A673 (cell line): ENCODE measurements at regions of chr1 and their contacts with region 1.

Region 1: DNA sequence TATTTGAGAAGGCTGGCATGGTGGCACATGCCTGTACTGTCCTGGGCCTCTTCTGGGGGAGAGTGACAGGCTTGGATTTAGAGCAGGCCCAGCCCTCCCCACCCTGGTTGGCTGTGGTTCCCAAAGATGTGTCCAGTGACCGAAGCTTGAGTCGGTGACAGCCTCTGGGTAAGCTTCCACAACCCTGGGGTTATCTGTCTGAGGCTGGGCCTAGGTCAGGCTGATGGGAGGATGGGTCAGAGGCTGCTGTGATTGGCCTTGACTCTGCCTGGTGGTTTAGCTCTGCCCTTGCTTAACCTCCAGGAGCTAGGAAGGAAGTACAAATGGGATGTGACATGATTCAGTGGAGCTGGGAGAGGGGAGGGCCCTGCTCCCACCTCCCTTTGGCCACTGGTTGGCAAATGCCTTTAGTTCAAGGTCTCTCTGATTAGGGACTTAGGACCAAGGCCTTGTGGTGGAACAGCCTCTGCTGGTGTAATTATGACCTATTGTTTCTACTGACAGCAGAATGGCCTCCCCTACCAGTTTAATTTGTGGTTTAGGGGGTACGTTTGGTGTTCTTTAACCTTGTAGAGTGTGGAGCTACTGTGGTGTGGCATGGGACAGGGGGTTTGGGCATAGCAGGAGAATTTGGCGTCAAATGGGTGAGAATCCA is 16.6 kb downstream of the NUDC start:
- DNase-seq: no peak
- H3K4me3 ChIP-seq: no peak overlapping the region
- H3K27ac ChIP-seq: no peak overlapping the region
- H3K4me1 ChIP-seq: no peaks in the 10 kb centered on the region
- H3K27me3 ChIP-seq: no peaks in the 10 kb centered on the region
- CTCF ChIP-seq: no peak

Region 2: DNA sequence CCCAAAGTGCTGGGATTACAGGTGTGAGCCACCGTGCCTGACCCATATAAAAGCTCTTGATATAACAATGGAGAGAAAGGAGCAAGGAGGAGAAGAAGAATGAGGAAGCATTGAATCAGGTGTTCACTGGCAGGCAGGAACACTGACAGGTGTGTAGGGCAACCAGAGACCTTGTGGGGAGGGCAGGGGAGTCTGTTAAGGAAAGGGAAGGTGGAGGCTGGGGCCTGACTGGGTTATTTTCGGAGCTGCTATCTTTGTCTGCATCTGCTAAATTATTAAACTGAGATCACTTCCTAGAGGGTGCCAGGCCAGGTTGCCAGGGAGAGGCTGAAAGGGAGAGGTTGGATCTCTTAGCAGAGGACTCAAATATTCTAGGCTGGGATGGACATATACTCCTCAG is 48.5 kb after region 1 on chr1:
- CTCF ChIA-PET with region 1: no interaction called
- POLR2A ChIA-PET with region 1: no interaction called
- intact Hi-C with region 1: no loop called
- DNase-seq: no peak
- H3K4me3 ChIP-seq: no peak overlapping the region
- H3K27ac ChIP-seq: no peak overlapping the region
- H3K4me1 ChIP-seq: no peaks in the 10 kb centered on the region
- H3K27me3 ChIP-seq: no peaks in the 10 kb centered on the region
- CTCF ChIP-seq: no peak

Region 3: DNA sequence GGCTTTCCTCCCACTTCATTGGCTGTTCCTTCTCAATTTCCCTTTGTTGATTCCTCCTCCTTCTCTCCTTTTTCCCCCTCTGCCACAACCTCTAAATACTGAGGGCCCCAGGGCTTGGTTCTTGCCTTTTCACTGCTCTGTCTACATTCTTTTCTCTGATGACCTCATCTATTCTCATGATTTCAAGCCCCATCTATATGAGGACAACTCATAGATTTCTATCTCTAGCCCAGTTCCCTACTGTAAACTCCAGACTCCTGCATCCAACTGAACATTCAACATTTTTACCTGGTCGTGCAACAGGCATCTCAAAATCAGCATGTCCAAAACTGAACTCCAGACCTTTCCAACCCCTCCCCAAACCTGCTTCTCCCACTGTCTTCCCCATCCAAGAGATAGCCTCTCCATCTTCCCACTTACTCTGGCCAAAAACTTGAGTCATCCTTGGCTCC is 228.2 kb after region 1 on chr1:
- CTCF ChIA-PET with region 1: no interaction called
- POLR2A ChIA-PET with region 1: interaction called, 12 read pairs
- intact Hi-C with region 1: no loop called
- DNase-seq: no peak
- H3K4me3 ChIP-seq: no peak overlapping the region
- H3K27ac ChIP-seq: no peak overlapping the region
- H3K4me1 ChIP-seq: no peaks in the 10 kb centered on the region
- H3K27me3 ChIP-seq: no peaks in the 10 kb centered on the region
- CTCF ChIP-seq: no peak